Activated CD4-positive, alpha-beta T cell treated with anti-CD3 and anti-CD28 coated beads for 36 hours (primary cell): ENCODE measurements at regions of chr15 and their contacts with region 1.

Region 1: GRCh38 chr15:60568301-60568742 is 89.4 kb upstream of the ICE2 start:
- DNase-seq: no peak
- ATAC-seq: peak; percentile 20
- H3K4me3 Mint-ChIP-seq: no peak overlapping the region
- H3K27ac Mint-ChIP-seq: peak overlapping the region; percentile 75
- H3K4me1 Mint-ChIP-seq: peaks cover 89% of the 10 kb centered on the region
- H3K27me3 Mint-ChIP-seq: no peaks in the 10 kb centered on the region

Region 2: DNA sequence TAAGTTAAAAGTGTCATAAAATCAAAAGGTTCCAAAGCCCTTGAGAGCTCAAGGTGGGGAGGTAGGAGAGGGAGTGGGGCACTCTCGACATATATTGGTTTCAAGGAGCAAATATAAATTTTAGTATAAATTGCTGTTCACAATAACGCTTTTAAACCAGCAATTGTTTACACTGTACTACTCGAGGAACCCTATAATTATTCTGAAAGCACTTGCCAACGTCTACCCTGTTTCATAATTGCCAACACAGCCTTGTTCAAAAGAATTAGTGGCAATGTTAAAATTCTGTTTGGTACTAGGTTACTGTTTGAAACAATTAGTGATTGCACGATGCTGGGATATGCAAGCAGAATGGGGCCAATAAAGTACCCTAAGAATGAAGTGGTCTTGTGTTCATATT is 13.0 kb before region 1 on chr15:
- CTCF ChIA-PET with region 1: interaction called, 11 read pairs
- POLR2A ChIA-PET with region 1: interaction called, 10 read pairs
- intact Hi-C with region 1: loop called (anchors 1 kb)
- DNase-seq: no peak
- ATAC-seq: no peak
- H3K4me3 Mint-ChIP-seq: no peak overlapping the region
- H3K27ac Mint-ChIP-seq: peak overlapping the region; percentile 43
- H3K4me1 Mint-ChIP-seq: peaks cover 90% of the 10 kb centered on the region
- H3K27me3 Mint-ChIP-seq: no peaks in the 10 kb centered on the region